Activated naive CD4-positive, alpha-beta T cell treated with anti-CD3 and anti-CD28 coated beads for 36 hours (primary cell): ENCODE measurements at regions of chr3 and their contacts with region 1.

Region 1: DNA sequence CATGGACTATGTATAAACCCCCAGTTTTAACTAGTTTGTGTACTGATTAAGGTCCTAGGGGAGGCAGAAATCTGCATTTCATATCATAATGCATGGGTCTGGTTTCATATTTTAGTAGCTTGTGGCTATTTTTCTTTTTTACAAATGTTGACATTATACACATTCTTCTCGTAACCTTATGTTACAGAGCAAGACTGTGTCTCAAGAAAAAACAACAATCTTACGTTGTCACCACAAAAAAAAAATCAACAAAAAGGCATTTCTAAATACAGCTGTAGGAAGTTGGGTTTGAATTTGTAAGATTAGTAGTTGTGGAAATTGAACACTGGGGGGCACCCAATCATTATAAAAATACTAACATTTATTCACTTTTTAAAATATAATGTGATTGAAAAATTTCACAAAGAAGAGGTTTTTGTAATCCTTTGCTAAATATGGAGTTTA is 17.9 kb downstream of the SERP1 start:
- DNase-seq: no peak
- H3K4me3 Mint-ChIP-seq: no peak overlapping the region
- H3K27ac Mint-ChIP-seq: no peak overlapping the region
- H3K4me1 Mint-ChIP-seq: peaks cover 8% of the 10 kb centered on the region
- H3K27me3 Mint-ChIP-seq: no peaks in the 10 kb centered on the region

Region 2: DNA sequence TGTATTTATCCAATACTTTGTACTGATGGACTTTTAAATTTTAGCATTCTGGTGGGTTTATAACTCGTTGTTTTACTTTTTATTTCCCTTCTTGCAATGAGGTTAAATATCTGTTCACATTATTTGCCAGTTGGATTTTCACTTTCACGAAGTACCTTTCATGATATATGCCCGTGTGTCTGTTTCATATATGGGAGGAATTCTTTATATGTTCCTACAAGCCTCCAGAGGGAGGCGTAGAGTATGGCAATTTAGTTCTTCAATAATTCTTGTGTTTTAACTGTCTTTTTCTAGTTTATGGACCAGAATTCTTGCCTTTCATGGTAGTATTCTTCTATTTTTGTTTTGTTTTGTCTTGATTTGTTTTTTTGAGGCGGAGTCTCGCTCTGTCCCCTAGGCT is 602.5 kb before region 1 on chr3:
- CTCF ChIA-PET with region 1: no interaction called
- intact Hi-C with region 1: no loop called
- DNase-seq: no peak
- H3K4me3 Mint-ChIP-seq: no peak overlapping the region
- H3K27ac Mint-ChIP-seq: no peak overlapping the region
- H3K4me1 Mint-ChIP-seq: no peaks in the 10 kb centered on the region
- H3K27me3 Mint-ChIP-seq: no peaks in the 10 kb centered on the region

Region 3: DNA sequence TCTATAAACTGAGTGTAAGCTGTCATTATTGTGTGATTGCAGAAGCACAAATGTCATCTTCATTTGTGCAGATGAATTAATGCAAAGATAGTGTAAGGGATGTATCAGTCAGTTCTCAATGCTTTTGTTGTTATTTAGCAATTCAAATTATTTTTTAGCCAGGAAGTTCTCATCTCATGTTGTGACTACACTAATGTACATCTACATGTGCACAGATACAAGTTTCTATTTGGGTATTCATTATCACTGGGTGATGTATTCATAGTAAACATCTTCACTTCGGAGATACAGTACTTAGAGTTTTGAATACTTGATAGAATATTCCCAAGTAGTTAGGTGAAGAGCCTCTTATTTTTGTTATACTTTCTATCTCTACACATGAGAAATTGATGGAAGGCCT is 29.3 kb after region 1 on chr3:
- CTCF ChIA-PET with region 1: no interaction called
- intact Hi-C with region 1: no loop called
- DNase-seq: no peak
- H3K4me3 Mint-ChIP-seq: no peak overlapping the region
- H3K27ac Mint-ChIP-seq: no peak overlapping the region
- H3K4me1 Mint-ChIP-seq: peaks cover 33% of the 10 kb centered on the region
- H3K27me3 Mint-ChIP-seq: no peaks in the 10 kb centered on the region

Region 4: DNA sequence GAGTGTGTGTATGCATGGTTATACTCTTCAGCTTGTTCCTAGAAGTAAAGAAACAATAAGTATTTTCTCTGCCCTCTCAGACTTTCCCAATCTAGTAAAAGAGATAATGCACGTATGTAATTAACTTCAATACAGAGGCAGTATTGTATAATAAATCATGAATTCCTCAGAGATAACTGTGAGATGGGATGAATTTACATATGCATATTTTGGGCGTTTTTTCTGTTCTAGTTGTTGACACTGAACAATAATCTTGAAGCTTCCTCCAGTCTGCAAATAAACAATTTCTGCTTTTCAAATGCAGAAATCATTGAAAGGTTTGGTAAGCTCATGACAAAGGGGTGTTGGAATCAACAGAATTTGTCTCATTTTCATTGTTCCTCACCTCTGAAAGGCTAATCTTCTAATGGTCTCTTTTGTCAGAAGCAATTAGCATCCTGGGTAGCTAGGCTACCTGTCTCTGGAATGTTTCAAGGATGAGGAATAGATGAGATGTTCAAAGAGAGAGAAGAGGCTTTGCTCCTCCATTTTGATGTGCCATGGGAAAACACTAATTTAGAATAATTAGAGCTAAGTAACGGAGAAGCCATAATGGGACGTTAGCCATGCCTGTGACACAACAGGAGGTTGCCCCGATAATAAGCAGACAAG is 277.9 kb after region 1 on chr3:
- CTCF ChIA-PET with region 1: no interaction called
- intact Hi-C with region 1: no loop called
- DNase-seq: no peak
- H3K4me3 Mint-ChIP-seq: no peak overlapping the region
- H3K27ac Mint-ChIP-seq: no peak overlapping the region
- H3K4me1 Mint-ChIP-seq: no peaks in the 10 kb centered on the region
- H3K27me3 Mint-ChIP-seq: peaks cover 8% of the 10 kb centered on the region

Region 5: DNA sequence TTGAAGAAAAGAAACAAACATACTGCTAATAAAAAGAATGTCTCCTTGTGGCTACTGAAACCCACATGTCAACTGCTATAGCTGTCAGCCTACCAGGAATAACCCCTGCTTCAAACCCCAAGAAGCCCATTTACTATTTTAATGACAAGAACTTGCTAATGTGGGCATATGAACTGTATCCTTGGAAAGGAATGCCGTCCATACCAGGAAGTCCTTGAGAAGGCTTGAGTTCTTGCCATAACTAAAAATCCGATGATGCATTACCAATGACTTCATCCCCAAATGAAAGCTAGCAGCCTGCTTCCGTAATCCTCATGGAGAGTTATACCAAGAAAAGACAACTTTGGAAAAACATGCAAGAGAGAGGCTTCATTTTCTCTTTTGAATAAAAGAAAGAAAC is 342.0 kb after region 1 on chr3:
- CTCF ChIA-PET with region 1: interaction called, 5 read pairs
- intact Hi-C with region 1: loop called (anchors 1 kb)
- DNase-seq: no peak
- H3K4me3 Mint-ChIP-seq: no peak overlapping the region
- H3K27ac Mint-ChIP-seq: no peak overlapping the region
- H3K4me1 Mint-ChIP-seq: no peaks in the 10 kb centered on the region
- H3K27me3 Mint-ChIP-seq: peaks cover 6% of the 10 kb centered on the region